ENCODE measurements at regions of chr11 and their contacts with region 1.

Region 1: DNA sequence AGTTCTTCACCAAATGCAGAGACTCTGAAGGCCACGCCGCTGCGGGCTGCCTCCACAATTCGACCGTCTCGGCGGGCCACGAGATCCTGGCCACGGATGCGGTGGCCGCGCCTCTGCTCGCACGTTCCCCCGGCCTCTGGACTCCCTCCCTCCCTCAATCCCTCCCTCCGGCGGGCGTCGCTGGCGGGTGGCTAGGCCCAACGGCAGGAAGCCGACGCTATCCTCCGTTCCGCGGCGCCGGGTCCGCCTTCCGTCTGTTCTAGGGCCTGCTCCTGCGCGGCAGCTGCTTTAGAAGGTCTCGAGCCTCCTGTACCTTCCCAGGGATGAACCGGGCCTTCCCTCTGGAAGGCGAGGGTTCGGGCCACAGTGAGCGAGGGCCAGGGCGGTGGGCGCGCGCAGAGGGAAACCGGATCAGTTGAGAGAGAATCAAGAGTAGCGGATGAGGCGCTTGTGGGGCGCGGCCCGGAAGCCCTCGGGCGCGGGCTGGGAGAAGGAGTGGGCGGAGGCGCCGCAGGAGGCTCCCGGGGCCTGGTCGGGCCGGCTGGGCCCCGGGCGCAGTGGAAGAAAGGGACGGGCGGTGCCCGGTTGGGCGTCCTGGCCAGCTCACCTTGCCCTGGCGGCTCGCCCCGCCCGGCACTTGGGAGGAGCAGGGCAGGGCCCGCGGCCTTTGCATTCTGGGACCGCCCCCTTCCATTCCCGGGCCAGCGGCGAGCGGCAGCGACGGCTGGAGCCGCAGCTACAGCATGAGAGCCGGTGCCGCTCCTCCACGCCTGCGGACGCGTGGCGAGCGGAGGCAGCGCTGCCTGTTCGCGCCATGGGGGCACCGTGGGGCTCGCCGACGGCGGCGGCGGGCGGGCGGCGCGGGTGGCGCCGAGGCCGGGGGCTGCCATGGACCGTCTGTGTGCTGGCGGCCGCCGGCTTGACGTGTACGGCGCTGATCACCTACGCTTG is at the start of gene FUT4:
- DNase-seq: peak; percentile 57 to 83 (median 69)
- H3K4me3 ChIP-seq: peak within 1 kb of the TSS; percentile 47 to 91 (median 80)
- H3K27ac ChIP-seq: peak within 1 kb of the TSS; percentile 23 to 97 (median 89)
- H3K27me3 ChIP-seq: no peaks in the 10 kb centered on the region
- CTCF ChIP-seq: peak in 20 of 56 donors; percentile 1 to 34 (median 16)
- total RNA-seq, gene FUT4: 2.2 to 6.7 (median 4.1) TPM

Region 2: DNA sequence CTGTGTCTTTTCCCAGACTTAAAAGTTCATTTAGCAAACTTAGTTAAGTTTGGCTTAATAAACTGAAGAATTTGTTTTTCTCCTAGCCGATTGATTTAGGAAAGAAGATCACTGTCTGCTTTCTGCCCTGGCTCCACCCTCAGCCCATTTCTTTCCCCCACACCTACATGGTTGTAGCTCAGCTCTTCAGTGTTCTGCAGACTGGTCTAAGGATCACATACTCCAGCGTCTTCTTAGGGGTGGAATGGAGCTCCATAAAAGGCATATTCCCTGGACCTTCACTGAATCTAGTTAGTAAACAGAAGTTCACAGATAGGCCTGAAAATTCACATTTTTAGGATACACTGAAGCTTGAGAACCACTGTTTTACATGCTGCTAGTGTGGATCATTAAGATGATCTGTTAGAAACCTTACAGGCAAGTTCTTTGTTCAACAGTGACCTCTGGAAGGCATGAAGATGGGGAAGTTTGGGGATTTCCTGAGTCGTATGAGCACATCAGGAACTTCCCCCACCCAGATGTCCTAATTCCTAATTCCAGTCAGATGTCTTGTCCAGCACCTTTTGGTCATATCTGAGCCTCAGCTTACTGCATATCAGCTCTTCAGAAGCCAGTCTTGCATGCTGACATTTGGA is 40.0 kb after region 1 on chr11:
- intact Hi-C with region 1: loop called in 1 of 2 experiments (anchors 5 kb)
- DNase-seq: no peak
- H3K4me3 ChIP-seq: no peak overlapping the region
- H3K27ac ChIP-seq: no peak overlapping the region
- H3K27me3 ChIP-seq: no peaks in the 10 kb centered on the region
- CTCF ChIP-seq: no peak

Region 3: DNA sequence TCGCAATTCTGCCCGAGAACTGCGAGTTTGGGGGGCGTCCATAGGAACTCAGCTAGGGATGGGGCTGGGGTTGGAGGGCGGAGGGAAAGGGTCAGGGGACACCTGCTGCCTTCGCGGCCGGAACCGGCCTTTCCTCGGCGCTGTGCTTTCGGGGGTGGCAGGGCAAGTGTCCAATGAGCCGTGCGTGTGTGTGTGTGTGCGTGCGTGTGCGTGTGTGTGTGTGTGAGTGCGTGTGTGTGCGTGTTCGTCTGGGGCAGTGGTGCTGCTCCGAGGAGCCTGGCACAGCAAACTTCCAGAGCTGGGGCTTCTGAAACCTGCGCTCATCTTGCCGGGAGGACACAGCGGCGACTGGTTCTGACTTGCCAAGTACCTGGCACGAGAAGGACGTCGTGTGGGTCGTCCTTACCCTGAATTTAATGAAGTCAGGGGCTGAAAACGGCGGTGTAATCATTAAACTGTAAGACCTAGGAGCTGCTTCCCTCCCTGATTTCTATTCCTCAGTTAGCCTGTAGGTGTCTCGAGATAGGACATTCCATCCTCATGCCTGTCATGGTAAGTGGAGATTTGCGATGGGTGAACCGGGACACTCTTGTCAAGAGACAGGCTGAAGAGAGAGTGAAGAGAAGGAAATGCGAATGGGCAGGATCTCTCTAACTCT is 197.2 kb after region 1 on chr11:
- intact Hi-C with region 1: loop called in 1 of 2 experiments (anchors 10 kb)
- DNase-seq: peak in 4 of 10 donors; percentile 31 to 36 (median 32)
- H3K4me3 ChIP-seq: peak overlapping the region; percentile 52 to 81 (median 68)
- H3K27ac ChIP-seq: peak overlapping the region in 20 of 59 donors; percentile 5 to 72 (median 40)
- H3K27me3 ChIP-seq: no peaks in the 10 kb centered on the region
- CTCF ChIP-seq: peak in 55 of 56 donors; percentile 17 to 60 (median 43)

Measured in dorsolateral prefrontal cortex (tissue), 120 donors.